Naive thymus-derived CD4-positive, alpha-beta T cell (primary cell): ENCODE measurements at regions of chr1 and their contacts with region 1.

Region 1: DNA sequence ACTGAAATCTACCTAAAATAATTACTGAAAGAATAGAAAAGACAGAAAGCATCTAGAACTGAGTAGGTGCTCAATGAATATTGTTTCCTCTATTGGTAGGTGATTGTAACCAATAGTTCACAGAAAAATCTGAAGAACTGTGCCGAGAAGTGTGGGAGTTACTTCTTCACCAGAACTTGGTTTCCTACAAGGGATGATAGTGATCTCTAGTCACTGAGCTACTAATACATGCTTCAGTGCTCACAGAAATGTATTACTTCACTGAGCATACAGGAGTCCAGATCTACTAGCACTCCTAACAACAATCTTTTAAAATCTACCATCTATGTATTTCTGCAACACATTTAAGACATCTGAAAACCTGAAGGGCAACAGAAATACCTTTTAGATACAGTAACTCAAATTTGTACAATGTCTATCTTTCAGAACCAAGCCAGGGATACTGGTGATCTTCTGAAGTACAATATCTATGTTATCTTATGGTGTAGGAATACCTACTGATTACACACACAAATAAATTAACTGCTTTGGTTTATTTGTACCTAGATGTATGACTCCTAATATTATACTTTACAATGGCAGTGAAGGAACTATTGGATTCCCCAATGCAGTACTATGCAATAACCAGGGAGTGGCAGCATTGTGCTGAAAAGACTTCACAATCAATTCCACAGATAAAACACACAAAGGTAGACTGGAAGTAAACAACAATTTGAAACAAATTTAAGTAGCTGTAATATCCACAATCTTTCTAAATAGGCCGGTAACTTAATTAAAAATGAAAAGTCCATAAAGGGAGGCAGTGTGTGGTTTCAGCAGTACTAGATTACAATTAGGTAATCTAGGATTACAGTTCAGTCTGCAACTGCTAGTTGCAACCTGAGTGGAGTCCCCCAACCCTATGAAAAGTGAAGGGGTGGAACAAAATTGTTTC is 243.0 kb downstream of the SLC45A1 start:
- DNase-seq: peak in 7 of 9 donors; percentile 35 to 64 (median 51)
- ATAC-seq: peak; percentile 84
- H3K4me3 ChIP-seq: no peak overlapping the region
- H3K4me3 Mint-ChIP-seq: peak overlapping the region in 1 of 10 donors; percentile 56
- H3K27ac ChIP-seq: no peak overlapping the region
- H3K27ac Mint-ChIP-seq: peak overlapping the region in 4 of 9 donors; percentile 0 to 17 (median 7)
- H3K4me1 ChIP-seq: peaks cover 0 to 4% of the 10 kb centered on the region in 2 donors
- H3K4me1 Mint-ChIP-seq: peaks cover 0 to 33% (median 10%) of the 10 kb centered on the region in 7 donors
- H3K27me3 ChIP-seq: no peaks in the 10 kb centered on the region
- H3K27me3 Mint-ChIP-seq: no peaks in the 10 kb centered on the region

Region 2: GRCh38 chr1:8516793-8517556 is 43.9 kb before region 1 on chr1:
- CTCF ChIA-PET with region 1: no interaction called
- POLR2A ChIA-PET with region 1: no interaction called
- intact Hi-C with region 1: no loop called
- DNase-seq: peak in 3 of 9 donors; percentile 11 to 28 (median 18)
- ATAC-seq: peak; percentile 70
- H3K4me3 ChIP-seq: no peak overlapping the region
- H3K4me3 Mint-ChIP-seq: peak overlapping the region; percentile 10 to 73 (median 60)
- H3K27ac ChIP-seq: peak overlapping the region; percentile 2
- H3K27ac Mint-ChIP-seq: peak overlapping the region in 7 of 9 donors; percentile 35 to 84 (median 79)
- H3K4me1 ChIP-seq: peaks cover 15 to 38% of the 10 kb centered on the region in 2 donors
- H3K4me1 Mint-ChIP-seq: peaks cover 49 to 97% (median 70%) of the 10 kb centered on the region in 7 donors
- H3K27me3 ChIP-seq: no peaks in the 10 kb centered on the region
- H3K27me3 Mint-ChIP-seq: no peaks in the 10 kb centered on the region

Region 3: GRCh38 chr1:8604041-8604945 is 43.4 kb after region 1 on chr1:
- CTCF ChIA-PET with region 1: interaction called, 3 read pairs
- POLR2A ChIA-PET with region 1: no interaction called
- intact Hi-C with region 1: loop called in 1 of 2 experiments (anchors 5 kb)
- DNase-seq: peak in 3 of 9 donors; percentile 10 to 43 (median 10)
- ATAC-seq: peak; percentile 45
- H3K4me3 ChIP-seq: no peak overlapping the region
- H3K4me3 Mint-ChIP-seq: peak overlapping the region; percentile 42 to 78 (median 67)
- H3K27ac ChIP-seq: peak overlapping the region; percentile 37
- H3K27ac Mint-ChIP-seq: peak overlapping the region; percentile 27 to 88 (median 77)
- H3K4me1 ChIP-seq: peaks cover 17 to 18% of the 10 kb centered on the region in 2 donors
- H3K4me1 Mint-ChIP-seq: peaks cover 24 to 51% (median 38%) of the 10 kb centered on the region in 7 donors
- H3K27me3 ChIP-seq: no peaks in the 10 kb centered on the region
- H3K27me3 Mint-ChIP-seq: no peaks in the 10 kb centered on the region

Region 4: DNA sequence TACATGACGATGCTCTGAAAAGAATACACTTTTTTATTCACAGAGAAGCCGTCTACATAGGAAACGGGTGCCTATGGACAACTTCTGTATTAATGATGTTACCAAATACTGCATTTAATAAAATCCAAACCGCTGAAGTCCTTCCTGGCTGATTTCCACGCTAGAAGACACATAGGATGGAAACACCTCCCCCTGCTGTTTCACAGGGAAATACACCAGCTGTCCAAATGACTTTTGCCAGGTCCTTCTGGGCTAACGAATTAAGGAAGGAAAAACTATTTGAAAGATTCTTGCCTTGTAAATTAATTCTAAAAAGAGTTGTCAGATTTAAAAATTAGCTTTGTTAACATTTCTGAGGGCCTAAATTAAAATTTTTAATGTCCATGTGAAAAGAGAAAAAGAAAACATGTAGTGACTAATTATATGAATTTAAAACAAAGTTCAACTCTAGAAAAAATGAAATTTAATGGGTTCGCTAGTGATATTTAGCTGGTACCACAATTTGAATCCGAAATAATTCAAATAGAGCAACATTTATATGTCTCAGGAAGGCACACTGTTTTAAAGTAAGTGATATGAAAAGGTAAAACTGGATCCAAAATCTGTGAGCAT is 110.5 kb after region 1 on chr1:
- CTCF ChIA-PET with region 1: interaction called, 21 read pairs
- POLR2A ChIA-PET with region 1: no interaction called
- intact Hi-C with region 1: loop called (anchors 1 kb)
- DNase-seq: peak in 5 of 9 donors; percentile 21 to 31 (median 26)
- ATAC-seq: peak; percentile 58
- H3K4me3 ChIP-seq: no peak overlapping the region
- H3K4me3 Mint-ChIP-seq: peak overlapping the region in 1 of 10 donors; percentile 7
- H3K27ac ChIP-seq: no peak overlapping the region
- H3K27ac Mint-ChIP-seq: no peak overlapping the region
- H3K4me1 ChIP-seq: peaks cover 0 to 9% of the 10 kb centered on the region in 2 donors
- H3K4me1 Mint-ChIP-seq: peaks cover 26 to 56% (median 35%) of the 10 kb centered on the region in 7 donors
- H3K27me3 ChIP-seq: no peaks in the 10 kb centered on the region
- H3K27me3 Mint-ChIP-seq: no peaks in the 10 kb centered on the region

Region 5: DNA sequence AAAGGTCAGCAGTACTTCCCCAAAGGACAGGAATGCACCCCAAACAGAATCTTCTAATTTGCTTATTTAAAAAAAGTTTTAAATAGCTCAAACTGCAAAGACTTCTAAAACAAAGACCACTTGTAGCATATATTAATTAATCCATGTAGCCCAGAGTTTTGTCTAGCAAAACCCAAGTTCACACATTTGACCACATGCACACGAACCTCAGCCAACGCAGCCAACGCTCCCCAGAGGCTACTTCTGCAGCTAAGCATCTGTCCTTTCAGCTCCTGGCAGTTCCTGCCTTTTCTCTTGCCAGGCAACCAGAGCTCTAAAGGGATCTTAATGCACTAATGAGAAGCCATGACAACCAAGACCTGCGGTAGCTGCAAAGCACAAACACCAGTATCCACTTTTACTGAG is 166.9 kb after region 1 on chr1:
- CTCF ChIA-PET with region 1: interaction called, 52 read pairs
- POLR2A ChIA-PET with region 1: interaction called, 3 read pairs
- intact Hi-C with region 1: loop called (anchors 1 kb)
- DNase-seq: no peak
- ATAC-seq: no peak
- H3K4me3 ChIP-seq: no peak overlapping the region
- H3K4me3 Mint-ChIP-seq: no peak overlapping the region
- H3K27ac ChIP-seq: no peak overlapping the region
- H3K27ac Mint-ChIP-seq: no peak overlapping the region
- H3K4me1 ChIP-seq: no peaks in the 10 kb centered on the region
- H3K4me1 Mint-ChIP-seq: peaks cover 5 to 24% (median 9%) of the 10 kb centered on the region in 7 donors
- H3K27me3 ChIP-seq: no peaks in the 10 kb centered on the region
- H3K27me3 Mint-ChIP-seq: no peaks in the 10 kb centered on the region

Region 6: GRCh38 chr1:8817406-8818324 is 256.8 kb after region 1 on chr1 and contains the start of gene RERE:
- CTCF ChIA-PET with region 1: no interaction called
- POLR2A ChIA-PET with region 1: interaction called, 5 read pairs
- intact Hi-C with region 1: loop called in 1 of 2 experiments (anchors 1 kb)
- DNase-seq: peak; percentile 92 to 100 (median 99)
- ATAC-seq: peak; percentile 99
- H3K4me3 ChIP-seq: peak within 1 kb of the TSS; percentile 96
- H3K4me3 Mint-ChIP-seq: peak within 1 kb of the TSS; percentile 84 to 99 (median 92)
- H3K27ac ChIP-seq: peak within 1 kb of the TSS; percentile 96
- H3K27ac Mint-ChIP-seq: peak within 1 kb of the TSS; percentile 83 to 99 (median 95)
- H3K4me1 ChIP-seq: peaks cover 10 to 15% of the 10 kb centered on the region in 2 donors
- H3K4me1 Mint-ChIP-seq: peaks cover 26 to 46% (median 41%) of the 10 kb centered on the region in 7 donors
- H3K27me3 ChIP-seq: no peaks in the 10 kb centered on the region
- H3K27me3 Mint-ChIP-seq: peaks cover 0 to 23% (median 0%) of the 10 kb centered on the region in 5 donors
- total RNA-seq, gene RERE: 75.6 to 114 (median 107) TPM

Region 7: DNA sequence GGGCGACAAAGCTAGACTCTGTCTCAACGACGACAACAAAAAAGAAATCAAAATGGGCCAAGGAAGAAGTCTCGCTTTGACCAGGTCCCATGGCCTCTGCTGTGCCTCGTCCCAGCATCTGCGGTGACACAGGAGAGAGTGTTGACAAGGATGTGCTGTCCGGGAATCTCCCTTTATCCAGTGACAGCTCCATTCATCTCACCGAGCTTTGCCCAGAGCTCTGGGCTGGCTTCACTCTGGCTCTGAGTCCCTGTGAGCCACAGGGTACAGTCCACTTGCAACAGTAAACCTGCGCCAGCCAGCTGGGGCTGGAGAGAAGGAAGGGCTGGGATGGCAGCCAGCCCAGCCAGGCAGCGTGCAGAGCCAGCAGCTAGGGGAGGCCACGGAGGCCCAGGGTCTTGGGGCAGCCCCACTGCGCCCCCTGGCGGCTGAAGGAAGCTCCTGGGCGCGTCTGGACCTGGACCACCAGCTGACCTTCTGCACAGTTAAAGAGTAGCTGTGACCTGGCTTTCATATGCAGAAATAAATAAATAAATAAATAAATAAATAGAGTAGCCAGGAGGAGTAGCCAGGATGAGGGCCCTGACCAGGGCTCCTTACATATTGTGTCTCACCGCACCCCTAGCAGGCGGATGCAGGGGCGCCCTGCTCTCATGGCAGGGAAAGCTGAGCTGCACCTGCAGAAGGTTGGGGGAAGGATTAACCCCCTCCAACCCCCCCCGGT is 287.9 kb after region 1 on chr1:
- CTCF ChIA-PET with region 1: interaction called, 35 read pairs
- POLR2A ChIA-PET with region 1: interaction called, 4 read pairs
- intact Hi-C with region 1: loop called (anchors 1 kb)
- DNase-seq: peak; percentile 37 to 81 (median 69)
- ATAC-seq: peak; percentile 93
- H3K4me3 ChIP-seq: no peak overlapping the region
- H3K4me3 Mint-ChIP-seq: no peak overlapping the region
- H3K27ac ChIP-seq: no peak overlapping the region
- H3K27ac Mint-ChIP-seq: no peak overlapping the region
- H3K4me1 ChIP-seq: peaks cover 0 to 3% of the 10 kb centered on the region in 2 donors
- H3K4me1 Mint-ChIP-seq: peaks cover 0 to 14% (median 5%) of the 10 kb centered on the region in 7 donors
- H3K27me3 ChIP-seq: no peaks in the 10 kb centered on the region
- H3K27me3 Mint-ChIP-seq: peaks cover 0 to 2% (median 0%) of the 10 kb centered on the region in 5 donors